Psoas muscle (tissue), 8 donors: ENCODE measurements at regions of chr1 and their contacts with region 1.

Region 1: DNA sequence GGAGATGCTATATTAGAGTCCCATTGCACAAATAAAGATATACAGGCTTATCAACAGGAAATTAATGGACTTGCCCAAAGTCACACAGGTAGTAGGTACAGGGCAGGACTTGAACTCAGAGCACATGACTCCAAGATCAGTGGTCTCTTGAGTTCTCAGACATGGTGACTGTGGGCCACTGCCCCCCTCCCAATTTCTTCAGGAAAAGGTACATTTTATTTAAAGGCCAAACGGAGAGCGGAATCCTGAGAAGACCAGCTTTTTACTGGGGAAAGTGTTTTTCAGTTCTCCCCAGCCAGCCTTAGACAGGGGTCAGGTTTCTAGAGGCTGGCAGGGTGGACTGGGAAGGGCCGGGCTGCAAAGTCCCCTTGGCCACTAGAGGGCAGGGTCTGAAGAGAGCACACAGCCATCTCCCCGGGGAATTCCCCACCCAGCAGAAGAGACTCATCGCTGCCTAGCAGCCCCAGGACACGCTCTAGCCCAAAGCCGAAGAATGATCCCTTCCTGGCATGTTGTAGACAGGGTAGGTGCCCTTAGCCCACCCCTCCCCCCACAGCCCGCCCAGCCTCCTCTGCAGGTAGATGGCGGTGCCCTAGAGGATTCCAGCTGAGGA is 29.7 kb downstream of the ACP6 start:
- DNase-seq: peak; percentile 68 to 87
- ATAC-seq: peak; percentile 97 to 98 (median 98)
- H3K4me3 ChIP-seq: no peak overlapping the region
- H3K27ac ChIP-seq: no peak overlapping the region
- H3K4me1 ChIP-seq: peaks cover 17% of the 10 kb centered on the region
- H3K27me3 ChIP-seq: no peaks in the 10 kb centered on the region
- CTCF ChIP-seq: peak; percentile 79

Region 2: DNA sequence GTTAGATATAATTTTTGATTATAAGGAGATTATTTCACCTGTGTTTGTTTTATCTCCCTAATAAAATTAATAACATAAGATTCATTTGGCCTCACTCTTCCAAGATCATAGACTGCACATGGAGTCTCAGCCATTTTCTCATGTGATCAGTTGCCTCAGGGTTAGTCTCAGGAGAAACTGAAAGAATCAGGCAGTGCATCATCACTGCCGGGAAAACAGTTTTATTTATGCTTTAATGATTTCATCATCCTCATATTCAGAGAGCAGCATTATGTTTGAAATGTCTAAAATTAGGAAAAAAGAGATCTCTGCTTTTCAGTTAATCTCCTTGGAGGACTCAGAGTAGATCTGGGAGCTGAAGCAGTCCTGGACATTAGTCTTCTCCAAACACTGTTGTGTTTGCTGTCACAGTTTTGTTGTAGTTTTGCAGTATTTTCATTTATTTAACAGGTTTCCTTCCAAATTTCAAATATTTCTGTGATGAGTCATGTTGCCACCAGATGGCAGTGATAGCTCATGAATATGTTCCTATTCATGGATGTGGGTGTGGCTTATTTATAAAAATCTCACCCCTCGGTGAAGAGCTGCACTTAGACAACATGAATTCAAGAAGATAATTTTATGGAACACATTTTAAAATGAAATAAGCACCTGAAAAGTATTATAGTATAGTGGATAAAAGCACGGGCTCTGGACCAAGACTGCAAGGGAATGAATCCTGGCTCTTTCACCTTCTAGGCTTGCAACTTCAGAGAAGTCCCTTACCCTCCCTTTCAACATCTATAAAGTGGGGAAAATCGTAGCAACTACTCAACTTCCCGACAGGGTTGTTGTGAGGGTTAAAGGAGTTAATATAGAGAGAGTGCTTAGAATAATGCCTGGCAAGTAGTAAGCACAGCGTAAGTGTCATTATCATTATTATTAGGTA is 367.0 kb before region 1 on chr1:
- intact Hi-C with region 1: loop called in 1 of 2 experiments (anchors 10 kb)
- DNase-seq: no peak
- ATAC-seq: peak; percentile 62 to 88 (median 76)
- H3K4me3 ChIP-seq: no peak overlapping the region
- H3K27ac ChIP-seq: peak overlapping the region; percentile 34
- H3K4me1 ChIP-seq: peaks cover 4% of the 10 kb centered on the region
- H3K27me3 ChIP-seq: no peaks in the 10 kb centered on the region
- CTCF ChIP-seq: peak; percentile 47

Region 3: GRCh38 chr1:147494998-147495580 is 145.6 kb before region 1 on chr1:
- intact Hi-C with region 1: loop called (anchors 1 to 5 kb)
- DNase-seq: peak; percentile 61 to 78
- ATAC-seq: peak; percentile 89 to 97 (median 96)
- H3K4me3 ChIP-seq: no peak overlapping the region
- H3K27ac ChIP-seq: no peak overlapping the region
- H3K4me1 ChIP-seq: peaks cover 6% of the 10 kb centered on the region
- H3K27me3 ChIP-seq: no peaks in the 10 kb centered on the region
- CTCF ChIP-seq: peak; percentile 95

Region 4: DNA sequence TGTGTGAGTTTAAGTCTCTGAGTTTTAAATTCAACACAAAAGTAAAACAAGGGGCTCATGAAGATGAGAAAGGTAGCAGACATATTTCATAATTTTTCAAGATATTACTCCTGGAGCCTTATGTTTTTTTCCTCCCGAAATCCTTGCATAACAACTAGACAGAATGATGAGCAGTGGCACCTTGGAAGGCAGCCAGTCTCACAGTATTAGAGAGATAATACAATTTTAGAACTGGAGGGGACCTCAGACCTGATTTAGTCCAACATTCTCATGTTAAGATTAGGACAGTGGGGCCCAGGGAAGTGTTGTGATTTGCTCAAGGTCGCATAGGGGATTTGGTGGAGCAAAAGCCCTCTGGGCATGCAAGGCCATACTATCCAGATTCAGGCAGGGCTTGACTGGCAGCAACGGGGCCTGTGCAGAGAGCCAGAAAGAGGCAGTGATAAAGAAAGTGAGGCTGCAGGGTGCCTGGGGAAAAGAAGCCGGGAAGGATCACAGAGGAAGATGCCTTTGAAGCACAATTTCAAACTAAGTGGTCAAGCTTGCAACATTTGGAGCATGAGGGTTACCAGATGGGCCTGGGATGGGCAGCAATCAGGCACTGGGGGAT is 130.8 kb before region 1 on chr1:
- intact Hi-C with region 1: loop called (anchors 2 to 5 kb)
- DNase-seq: no peak
- ATAC-seq: no peak
- H3K4me3 ChIP-seq: no peak overlapping the region
- H3K27ac ChIP-seq: no peak overlapping the region
- H3K4me1 ChIP-seq: no peaks in the 10 kb centered on the region
- H3K27me3 ChIP-seq: peaks cover 0 to 4% (median 0%) of the 10 kb centered on the region in 3 donors
- CTCF ChIP-seq: no peak

Region 5: DNA sequence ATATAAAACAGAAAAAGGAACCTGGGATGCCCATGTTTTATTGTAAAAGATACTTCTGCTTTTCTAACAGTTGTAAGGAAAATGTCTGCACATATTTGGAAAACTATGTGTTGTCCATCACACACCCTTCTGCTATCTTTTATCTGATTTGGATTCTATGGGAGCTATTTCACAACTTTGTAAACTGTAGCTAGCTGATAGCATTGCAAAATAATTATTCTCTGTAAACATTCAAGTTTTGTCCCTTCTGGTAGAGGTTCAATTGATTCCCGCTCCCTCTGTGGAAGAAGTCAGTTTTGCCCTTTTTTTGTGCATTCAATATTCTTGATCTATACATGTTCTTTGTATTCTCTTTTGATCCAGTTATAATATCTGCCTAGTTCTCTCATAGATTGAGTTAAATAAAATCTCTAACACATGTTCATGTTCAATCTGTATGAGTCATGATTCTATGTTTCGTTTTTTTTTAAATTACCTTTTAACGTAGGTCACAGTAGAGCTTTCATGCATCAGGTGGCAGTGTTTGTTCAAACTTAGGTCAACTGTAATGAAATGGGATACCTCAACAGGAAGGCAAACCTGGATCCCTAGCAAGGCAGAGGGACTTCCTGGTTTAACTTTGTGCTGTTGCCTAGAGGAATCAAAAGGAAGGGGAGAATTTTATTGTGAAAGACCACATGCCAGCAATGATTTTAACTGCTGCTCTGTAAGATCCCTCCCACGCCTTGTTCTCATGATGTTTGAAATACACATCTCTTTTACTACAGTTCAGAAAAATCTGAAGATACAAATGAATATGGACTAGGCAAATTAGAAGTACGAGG is 125.4 kb before region 1 on chr1:
- intact Hi-C with region 1: loop called (anchors 2 to 5 kb)
- DNase-seq: no peak
- ATAC-seq: peak; percentile 95 to 99 (median 96)
- H3K4me3 ChIP-seq: no peak overlapping the region
- H3K27ac ChIP-seq: peak overlapping the region; percentile 43
- H3K4me1 ChIP-seq: peaks cover 12% of the 10 kb centered on the region
- H3K27me3 ChIP-seq: no peaks in the 10 kb centered on the region
- CTCF ChIP-seq: peak; percentile 50

Region 6: DNA sequence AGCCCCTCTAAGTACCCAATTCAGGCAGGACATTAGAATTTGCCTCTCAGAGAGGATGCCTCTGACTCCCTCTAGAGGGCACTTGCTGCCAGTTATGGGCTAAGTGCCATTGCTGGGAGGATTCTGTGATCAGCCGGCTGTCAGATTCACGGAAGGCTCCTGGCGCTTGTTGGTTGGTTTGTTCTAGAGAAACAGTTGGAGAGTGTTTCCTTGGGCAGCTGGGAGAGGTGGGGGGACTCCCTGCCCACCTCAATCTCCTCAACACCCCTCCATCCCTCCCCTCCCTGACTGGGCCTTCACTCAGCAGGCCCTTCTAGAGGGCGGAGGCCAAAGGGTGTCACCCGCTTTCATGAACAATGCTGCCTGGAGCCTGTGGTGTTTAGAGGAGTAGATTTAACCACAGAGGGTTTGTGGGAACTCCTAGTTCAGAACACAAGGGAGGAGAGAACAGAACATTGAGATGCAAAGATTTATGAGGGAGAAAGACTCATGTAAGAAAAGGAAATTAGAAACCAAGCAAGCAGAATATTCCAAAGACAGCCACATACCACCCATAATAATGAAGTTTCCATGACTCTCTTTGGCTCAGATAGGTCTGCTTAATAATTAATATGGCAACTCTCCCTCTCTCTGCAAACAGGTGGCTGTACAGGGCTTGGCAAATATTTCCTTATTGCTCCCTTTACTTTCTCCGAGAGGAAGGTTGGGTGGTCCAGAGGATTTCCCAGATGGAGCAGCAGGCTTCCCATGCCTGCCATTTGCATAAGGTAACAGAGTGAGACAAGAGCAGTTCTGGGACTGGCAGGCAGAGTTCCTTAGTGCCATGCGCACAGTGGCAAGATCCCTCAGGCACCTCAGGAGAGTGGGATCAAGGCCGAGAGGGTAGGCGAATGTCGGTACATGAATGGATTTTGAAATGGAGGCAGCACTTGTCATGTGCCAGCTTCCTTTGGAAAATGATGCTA is 59.7 kb after region 1 on chr1:
- intact Hi-C with region 1: loop called in 1 of 2 experiments (anchors 5 kb)
- DNase-seq: peak in 1 of 2 donors; percentile 24
- ATAC-seq: peak; percentile 65 to 92 (median 83)
- H3K4me3 ChIP-seq: no peak overlapping the region
- H3K27ac ChIP-seq: no peak overlapping the region
- H3K4me1 ChIP-seq: no peaks in the 10 kb centered on the region
- H3K27me3 ChIP-seq: no peaks in the 10 kb centered on the region
- CTCF ChIP-seq: peak; percentile 77

Region 7: GRCh38 chr1:147890177-147890790 is 249.6 kb after region 1 on chr1:
- intact Hi-C with region 1: loop called in 1 of 2 experiments (anchors 2 kb)
- DNase-seq: peak; percentile 46 to 68
- ATAC-seq: peak in 1 of 4 donors; percentile 39
- H3K4me3 ChIP-seq: no peak overlapping the region
- H3K27ac ChIP-seq: no peak overlapping the region
- H3K4me1 ChIP-seq: no peaks in the 10 kb centered on the region
- H3K27me3 ChIP-seq: no peaks in the 10 kb centered on the region
- CTCF ChIP-seq: peak; percentile 38